ENCODE measurements at regions of chr10 and their contacts with region 1.

Region 1: GRCh38 chr10:12348870-12349628 is at the start of gene CAMK1D:
- DNase-seq: peak; percentile 56
- H3K4me3 Mint-ChIP-seq: peak within 1 kb of the TSS; percentile 80
- H3K27ac Mint-ChIP-seq: no peak within 1 kb of the TSS
- H3K4me1 Mint-ChIP-seq: peaks cover 12% of the 10 kb centered on the region
- H3K27me3 Mint-ChIP-seq: peaks cover 69% of the 10 kb centered on the region
- CTCF ChIP-seq: no peak
- total RNA-seq, gene CAMK1D: 2.6 and 2.7 TPM in 2 replicates

Region 2: DNA sequence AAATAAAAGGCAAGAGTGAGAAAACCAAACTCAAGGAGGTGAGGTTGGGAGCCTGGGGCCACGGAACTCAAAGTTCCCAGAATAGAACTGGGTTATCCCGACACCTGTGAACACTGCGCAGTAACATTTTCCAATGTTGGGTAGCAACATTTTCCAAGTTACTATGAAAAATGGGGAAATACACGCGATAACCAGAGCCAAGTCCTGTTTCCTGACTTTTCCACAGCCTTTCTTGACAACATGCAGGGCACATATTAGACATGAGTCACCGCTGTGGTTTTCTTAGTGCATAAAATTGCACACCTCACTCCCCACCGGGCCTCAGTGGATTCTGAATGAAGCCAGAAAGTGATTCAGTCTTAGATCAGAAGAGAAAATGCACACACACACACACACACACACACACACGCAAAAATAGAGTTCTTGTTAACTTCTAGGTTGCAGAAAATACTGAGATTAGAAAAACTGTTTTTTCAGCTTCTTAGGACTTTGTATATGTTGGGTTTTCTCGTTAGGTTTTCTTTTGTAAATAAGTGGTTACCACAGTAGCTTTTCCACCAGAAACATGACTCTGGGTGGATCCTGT is 70.3 kb after region 1 on chr10:
- CTCF ChIA-PET with region 1: no interaction called
- intact Hi-C with region 1: loop called (anchors 10 kb)
- DNase-seq: peak; percentile 31
- H3K4me3 Mint-ChIP-seq: no peak overlapping the region
- H3K27ac Mint-ChIP-seq: peak overlapping the region; percentile 42
- H3K4me1 Mint-ChIP-seq: peaks cover 21% of the 10 kb centered on the region
- H3K27me3 Mint-ChIP-seq: peaks cover 39% of the 10 kb centered on the region
- CTCF ChIP-seq: no peak

Region 3: GRCh38 chr10:12466704-12467305 is 117.8 kb after region 1 on chr10:
- CTCF ChIA-PET with region 1: no interaction called
- intact Hi-C with region 1: no loop called
- DNase-seq: no peak
- H3K4me3 Mint-ChIP-seq: no peak overlapping the region
- H3K27ac Mint-ChIP-seq: no peak overlapping the region
- H3K4me1 Mint-ChIP-seq: peaks cover 8% of the 10 kb centered on the region
- H3K27me3 Mint-ChIP-seq: peaks cover 52% of the 10 kb centered on the region
- CTCF ChIP-seq: no peak

Region 4: GRCh38 chr10:12656518-12657142 is 307.6 kb after region 1 on chr10:
- CTCF ChIA-PET with region 1: interaction called, 4 read pairs
- intact Hi-C with region 1: loop called (anchors 10 kb)
- DNase-seq: peak; percentile 11
- H3K4me3 Mint-ChIP-seq: no peak overlapping the region
- H3K27ac Mint-ChIP-seq: no peak overlapping the region
- H3K4me1 Mint-ChIP-seq: no peaks in the 10 kb centered on the region
- H3K27me3 Mint-ChIP-seq: peaks cover 66% of the 10 kb centered on the region
- CTCF ChIP-seq: no peak

Measured in Calu3 (cell line).